ENCODE measurements at regions of chr14 and their contacts with region 1.

Region 1: GRCh38 chr14:101761032-101761880 is at the start of gene PPP2R5C:
- DNase-seq: peak; percentile 95 to 96
- ATAC-seq: peak; percentile 85 to 88 (median 86)
- H3K4me3 ChIP-seq: peak within 1 kb of the TSS; percentile 99
- H3K27ac ChIP-seq: peak within 1 kb of the TSS; percentile 95
- H3K4me1 ChIP-seq: no peaks in the 10 kb centered on the region
- H3K27me3 ChIP-seq: no peaks in the 10 kb centered on the region
- CTCF ChIP-seq: no peak
- total RNA-seq, gene PPP2R5C: 53.1 to 76.6 (median 63.0) TPM

Region 2: DNA sequence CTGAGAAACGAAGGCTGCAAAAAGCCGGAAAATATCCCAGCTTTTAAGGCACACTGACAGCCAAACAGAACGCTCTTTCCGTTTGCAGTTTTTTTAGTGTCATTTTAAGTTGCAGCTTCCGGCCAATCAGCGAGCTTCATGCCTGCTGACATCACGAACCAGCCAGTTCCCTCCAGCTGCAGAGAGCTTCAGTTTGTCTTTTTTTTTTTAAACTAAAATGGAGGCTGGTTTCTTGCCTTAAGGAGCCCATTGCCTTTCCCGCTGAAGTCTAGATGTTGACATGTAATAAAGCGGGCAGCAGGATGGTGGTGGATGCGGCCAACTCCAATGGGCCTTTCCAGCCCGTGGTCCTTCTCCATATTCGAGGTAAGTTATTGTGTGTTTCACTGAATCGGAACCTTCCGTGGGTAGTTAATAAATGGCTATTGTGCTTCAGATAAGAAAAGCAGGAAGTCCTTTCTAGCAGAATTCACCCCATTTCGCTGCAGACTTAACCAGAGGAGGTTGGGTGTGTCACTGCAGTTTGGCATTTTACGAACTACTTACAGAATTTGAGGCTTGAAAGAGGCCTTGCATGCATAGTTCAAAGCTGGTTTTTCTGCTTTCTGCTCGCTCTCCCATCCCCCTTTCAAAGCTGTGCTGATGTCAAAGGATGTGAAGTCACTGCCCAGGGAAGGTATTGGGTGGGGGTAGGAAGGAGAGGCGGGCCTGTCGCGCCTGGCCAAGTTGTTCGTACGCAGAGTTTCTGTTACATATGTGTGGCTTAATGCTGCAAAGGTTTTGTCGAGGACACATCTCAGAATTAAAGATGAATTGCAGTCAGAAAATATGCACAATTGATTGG is 48.6 kb after region 1 on chr14:
- intact Hi-C with region 1: loop called (anchors 5 kb)
- DNase-seq: peak; percentile 77 to 88
- ATAC-seq: peak; percentile 93 to 97 (median 95)
- H3K4me3 ChIP-seq: peak overlapping the region; percentile 82
- H3K27ac ChIP-seq: peak overlapping the region; percentile 98
- H3K4me1 ChIP-seq: peaks cover 49% of the 10 kb centered on the region
- H3K27me3 ChIP-seq: no peaks in the 10 kb centered on the region
- CTCF ChIP-seq: no peak

Region 3: DNA sequence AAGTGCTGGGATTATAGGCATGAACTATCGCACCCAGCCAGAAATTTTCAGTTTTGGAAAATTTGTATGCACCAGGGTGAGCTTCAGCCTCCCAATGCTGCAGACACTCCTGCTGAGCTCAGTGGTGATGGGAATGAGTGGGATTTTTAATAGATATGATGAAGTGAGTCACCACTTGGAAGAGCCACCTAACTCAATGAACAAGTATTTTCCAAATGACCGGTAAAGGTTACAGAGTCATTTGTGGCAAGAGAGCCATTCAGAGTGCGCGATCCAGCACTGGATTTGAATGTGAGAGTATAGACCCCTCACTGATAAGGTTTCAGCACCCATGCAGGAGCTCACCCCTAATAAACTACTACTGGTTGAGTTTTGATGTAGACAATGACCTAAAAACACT is 100.9 kb after region 1 on chr14:
- intact Hi-C with region 1: no loop called
- DNase-seq: no peak
- ATAC-seq: peak in 3 of 4 donors; percentile 65 to 67 (median 67)
- H3K4me3 ChIP-seq: no peak overlapping the region
- H3K27ac ChIP-seq: no peak overlapping the region
- H3K4me1 ChIP-seq: no peaks in the 10 kb centered on the region
- H3K27me3 ChIP-seq: no peaks in the 10 kb centered on the region
- CTCF ChIP-seq: no peak

Region 4: GRCh38 chr14:101927859-101928258 is 166.6 kb after region 1 on chr14:
- intact Hi-C with region 1: loop called in 1 of 2 experiments (anchors 10 kb)
- DNase-seq: peak; percentile 90 to 94
- ATAC-seq: peak; percentile 98
- H3K4me3 ChIP-seq: peak overlapping the region; percentile 26
- H3K27ac ChIP-seq: peak overlapping the region; percentile 71
- H3K4me1 ChIP-seq: peaks cover 30% of the 10 kb centered on the region
- H3K27me3 ChIP-seq: no peaks in the 10 kb centered on the region
- CTCF ChIP-seq: no peak

Measured in psoas muscle (tissue), 8 donors.